Activated CD4-positive, alpha-beta T cell treated with anti-CD3 and anti-CD28 coated beads, Interleukin-2, amount 10 ng/mL, durations not matched to agents 24 days and 14 days (primary cell): ENCODE measurements at regions of chr12 and their contacts with region 1.

Region 1: DNA sequence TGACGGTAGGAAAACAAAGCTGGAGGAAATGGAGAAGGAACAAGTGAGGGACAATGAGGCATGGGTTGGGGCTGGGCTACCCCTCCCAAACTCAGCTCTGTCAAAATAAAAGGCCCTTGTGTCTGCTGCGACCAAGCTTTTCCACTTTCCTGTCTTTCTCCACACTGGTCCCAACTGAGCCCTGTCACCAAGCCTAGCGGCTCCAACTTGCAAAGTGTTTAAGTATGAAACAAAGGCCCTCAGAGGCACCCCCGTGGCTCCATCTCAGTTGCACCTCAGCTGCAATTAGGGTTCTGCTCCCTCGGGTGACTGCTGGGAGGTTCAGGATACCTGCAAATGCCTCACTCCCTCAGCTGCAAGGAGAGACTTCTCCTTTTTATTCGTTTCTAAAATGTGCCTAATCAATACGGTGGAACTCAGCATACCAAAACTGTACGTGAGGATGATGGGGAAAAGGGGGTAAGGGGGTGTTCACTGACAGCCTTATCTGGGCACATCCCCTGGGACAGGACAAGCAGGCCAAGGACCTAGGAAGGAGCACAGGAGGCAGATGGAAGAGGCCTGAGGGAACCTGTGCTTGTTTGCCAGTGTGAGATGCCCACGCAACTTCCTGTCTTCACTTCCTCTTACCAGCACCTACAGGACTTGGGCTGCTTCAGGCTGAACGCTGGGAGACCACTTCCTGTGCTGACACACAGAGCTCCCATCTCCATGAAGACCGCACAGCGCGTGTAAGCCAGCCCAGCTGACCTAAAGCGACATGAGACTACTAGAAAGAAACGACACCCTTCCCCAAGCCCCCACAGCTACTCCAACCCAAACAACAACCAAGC is 8.9 kb downstream of the VAMP1 start:
- DNase-seq: peak; percentile 95
- H3K4me3 Mint-ChIP-seq: peak overlapping the region; percentile 84
- H3K27ac Mint-ChIP-seq: peak overlapping the region; percentile 97
- H3K4me1 Mint-ChIP-seq: peaks cover 76% of the 10 kb centered on the region
- H3K27me3 Mint-ChIP-seq: no peaks in the 10 kb centered on the region

Region 2: GRCh38 chr12:6335451-6336078 is 126.1 kb before region 1 on chr12:
- intact Hi-C with region 1: loop called (anchors 2 kb)
- DNase-seq: peak; percentile 94
- H3K4me3 Mint-ChIP-seq: no peak overlapping the region
- H3K27ac Mint-ChIP-seq: no peak overlapping the region
- H3K4me1 Mint-ChIP-seq: peaks cover 41% of the 10 kb centered on the region
- H3K27me3 Mint-ChIP-seq: no peaks in the 10 kb centered on the region

Region 3: DNA sequence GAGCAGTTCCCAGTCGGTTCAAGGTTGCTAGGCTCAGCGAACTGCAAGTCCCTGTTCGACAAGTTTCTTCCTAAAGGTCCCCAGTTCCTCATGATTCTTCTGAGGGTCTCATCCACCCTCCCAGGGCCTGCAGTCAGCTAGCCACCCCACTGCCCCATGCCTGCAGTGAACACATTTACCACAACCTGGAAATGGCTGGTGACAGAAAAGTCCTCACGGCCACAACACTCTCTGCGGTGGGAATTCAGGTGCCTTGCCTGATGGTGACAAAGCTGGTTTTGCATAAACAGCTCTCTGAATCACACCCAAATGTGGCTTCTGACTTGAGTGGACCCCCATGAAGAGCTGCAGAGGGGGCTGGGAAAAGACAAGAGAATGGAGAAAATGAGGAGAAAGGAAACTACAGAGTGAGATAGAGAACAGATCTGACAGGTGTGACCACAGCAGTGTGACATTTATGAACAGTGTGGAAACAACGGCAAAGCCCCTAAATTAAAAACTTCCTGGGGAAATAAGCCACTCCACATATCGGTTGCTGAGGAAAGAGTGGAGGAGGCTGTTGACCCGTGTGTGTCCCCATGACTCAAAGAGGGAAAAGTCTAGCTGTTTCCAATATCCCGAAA is 18.1 kb before region 1 on chr12:
- intact Hi-C with region 1: loop called (anchors 1 kb)
- DNase-seq: peak; percentile 73
- H3K4me3 Mint-ChIP-seq: peak overlapping the region; percentile 93
- H3K27ac Mint-ChIP-seq: peak overlapping the region; percentile 94
- H3K4me1 Mint-ChIP-seq: peaks cover 65% of the 10 kb centered on the region
- H3K27me3 Mint-ChIP-seq: no peaks in the 10 kb centered on the region

Region 4: DNA sequence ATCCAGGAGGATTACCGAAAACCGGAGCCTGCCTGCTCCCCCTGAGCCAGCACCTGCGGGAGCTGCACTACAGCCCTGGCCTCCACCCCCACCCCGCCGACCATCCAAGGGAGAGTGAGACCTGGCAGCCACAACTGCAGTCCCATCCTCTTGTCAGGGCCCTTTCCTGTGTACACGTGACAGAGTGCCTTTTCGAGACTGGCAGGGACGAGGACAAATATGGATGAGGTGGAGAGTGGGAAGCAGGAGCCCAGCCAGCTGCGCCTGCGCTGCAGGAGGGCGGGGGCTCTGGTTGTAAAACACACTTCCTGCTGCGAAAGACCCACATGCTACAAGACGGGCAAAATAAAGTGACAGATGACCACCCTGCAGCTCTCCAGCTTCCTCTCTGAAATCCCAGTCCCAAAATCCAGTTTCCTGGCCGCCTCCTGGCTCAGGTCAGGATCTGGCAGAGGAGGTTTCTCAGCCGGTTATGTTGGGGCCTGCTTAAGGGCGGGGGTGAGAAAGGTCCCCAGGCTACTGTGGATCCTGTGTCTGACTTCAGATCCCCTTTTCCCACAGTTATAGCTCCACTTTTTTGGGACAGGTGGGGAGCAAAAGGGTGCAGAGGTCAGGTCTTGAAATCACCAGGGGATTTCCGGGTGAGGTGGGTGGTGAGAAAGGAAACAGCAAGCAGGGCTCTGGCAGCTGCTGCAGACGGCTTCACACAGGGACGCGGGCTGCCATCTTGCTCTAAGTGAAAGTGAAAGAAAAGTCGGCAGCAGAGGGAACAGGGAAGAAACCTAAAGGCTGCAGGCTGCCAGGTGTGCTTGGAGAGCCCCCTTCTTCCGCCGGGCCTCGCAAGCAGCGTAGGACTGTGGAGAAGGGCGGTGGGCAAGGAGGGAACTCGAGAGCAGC is 10.0 kb before region 1 on chr12 and contains the start of gene TAPBPL:
- intact Hi-C with region 1: loop called (anchors 1 kb)
- DNase-seq: peak; percentile 94
- H3K4me3 Mint-ChIP-seq: peak within 1 kb of the TSS; percentile 97
- H3K27ac Mint-ChIP-seq: peak within 1 kb of the TSS; percentile 97
- H3K4me1 Mint-ChIP-seq: peaks cover 66% of the 10 kb centered on the region
- H3K27me3 Mint-ChIP-seq: no peaks in the 10 kb centered on the region
- total RNA-seq, gene TAPBPL: 31.9 and 33.0 TPM in 2 replicates

Region 5: GRCh38 chr12:6493497-6494257 is 32.1 kb after region 1 on chr12 and contains the start of gene NCAPD2:
- intact Hi-C with region 1: loop called (anchors 2 kb)
- DNase-seq: peak; percentile 99
- H3K4me3 Mint-ChIP-seq: peak within 1 kb of the TSS; percentile 95
- H3K27ac Mint-ChIP-seq: peak within 1 kb of the TSS; percentile 98
- H3K4me1 Mint-ChIP-seq: peaks cover 34% of the 10 kb centered on the region
- H3K27me3 Mint-ChIP-seq: no peaks in the 10 kb centered on the region
- total RNA-seq, gene NCAPD2: 104 and 106 TPM in 2 replicates

Region 6: GRCh38 chr12:6554168-6555017 is 92.8 kb after region 1 on chr12:
- intact Hi-C with region 1: loop called (anchors 5 kb)
- DNase-seq: peak; percentile 86
- H3K4me3 Mint-ChIP-seq: peak overlapping the region; percentile 92
- H3K27ac Mint-ChIP-seq: peak overlapping the region; percentile 81
- H3K4me1 Mint-ChIP-seq: peaks cover 39% of the 10 kb centered on the region
- H3K27me3 Mint-ChIP-seq: no peaks in the 10 kb centered on the region